HEK293T (cell line): ENCODE measurements at regions of chr1 and their contacts with region 1.

Region 1: DNA sequence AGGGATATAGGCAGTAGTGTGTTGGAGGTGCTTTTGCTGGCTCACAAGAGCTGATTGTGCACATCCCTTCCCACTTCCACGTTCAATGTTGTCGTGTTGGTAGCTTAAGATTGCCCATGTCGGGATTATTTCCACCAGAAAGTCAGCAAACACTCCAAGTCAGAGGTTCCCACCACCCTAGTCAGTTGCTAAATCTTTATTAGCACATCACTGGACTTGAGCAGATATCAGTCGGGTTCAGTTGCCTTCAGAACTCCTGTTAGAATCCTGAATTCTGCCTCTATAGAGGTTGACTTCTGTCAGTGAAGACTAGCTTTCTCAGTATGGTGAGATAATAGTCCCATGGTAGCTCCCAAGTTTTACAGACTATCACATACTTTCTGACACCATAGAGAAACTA is 10.5 kb downstream of the AGL start:
- DNase-seq: no peak

Region 2: DNA sequence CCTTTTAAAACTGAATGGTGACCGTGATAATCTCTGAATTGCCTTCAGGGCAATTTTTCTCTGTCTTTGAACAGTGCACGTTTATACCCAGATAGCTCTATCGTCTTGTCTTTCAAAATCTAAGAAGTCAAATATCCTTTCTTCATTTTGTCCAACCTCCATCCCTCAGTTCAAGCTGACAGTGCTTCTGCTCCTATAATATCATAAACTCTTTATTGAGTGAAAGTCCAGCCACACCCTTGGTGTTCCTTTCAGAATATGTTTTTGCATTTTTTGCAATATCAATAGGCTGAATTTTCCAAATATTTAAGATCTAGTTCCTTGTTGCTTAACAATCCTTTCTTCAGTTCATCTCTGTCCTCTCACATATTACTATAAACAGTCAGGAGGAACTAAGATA is 59.1 kb before region 1 on chr1:
- CTCF ChIA-PET with region 1: no interaction called
- POLR2A ChIA-PET with region 1: no interaction called
- DNase-seq: no peak

Region 3: GRCh38 chr1:99849744-99850458 is 10.8 kb before region 1 on chr1 and contains the start of gene AGL:
- CTCF ChIA-PET with region 1: no interaction called
- POLR2A ChIA-PET with region 1: interaction called, 11 read pairs
- DNase-seq: peak; percentile 92

Region 4: GRCh38 chr1:99872063-99872462 is 11.4 kb after region 1 on chr1:
- CTCF ChIA-PET with region 1: no interaction called
- POLR2A ChIA-PET with region 1: no interaction called
- DNase-seq: no peak

Region 5: GRCh38 chr1:99943223-99943794 is 82.6 kb after region 1 on chr1:
- CTCF ChIA-PET with region 1: no interaction called
- POLR2A ChIA-PET with region 1: no interaction called
- DNase-seq: no peak